ENCODE measurements at regions of chr11 and their contacts with region 1.

Region 1: DNA sequence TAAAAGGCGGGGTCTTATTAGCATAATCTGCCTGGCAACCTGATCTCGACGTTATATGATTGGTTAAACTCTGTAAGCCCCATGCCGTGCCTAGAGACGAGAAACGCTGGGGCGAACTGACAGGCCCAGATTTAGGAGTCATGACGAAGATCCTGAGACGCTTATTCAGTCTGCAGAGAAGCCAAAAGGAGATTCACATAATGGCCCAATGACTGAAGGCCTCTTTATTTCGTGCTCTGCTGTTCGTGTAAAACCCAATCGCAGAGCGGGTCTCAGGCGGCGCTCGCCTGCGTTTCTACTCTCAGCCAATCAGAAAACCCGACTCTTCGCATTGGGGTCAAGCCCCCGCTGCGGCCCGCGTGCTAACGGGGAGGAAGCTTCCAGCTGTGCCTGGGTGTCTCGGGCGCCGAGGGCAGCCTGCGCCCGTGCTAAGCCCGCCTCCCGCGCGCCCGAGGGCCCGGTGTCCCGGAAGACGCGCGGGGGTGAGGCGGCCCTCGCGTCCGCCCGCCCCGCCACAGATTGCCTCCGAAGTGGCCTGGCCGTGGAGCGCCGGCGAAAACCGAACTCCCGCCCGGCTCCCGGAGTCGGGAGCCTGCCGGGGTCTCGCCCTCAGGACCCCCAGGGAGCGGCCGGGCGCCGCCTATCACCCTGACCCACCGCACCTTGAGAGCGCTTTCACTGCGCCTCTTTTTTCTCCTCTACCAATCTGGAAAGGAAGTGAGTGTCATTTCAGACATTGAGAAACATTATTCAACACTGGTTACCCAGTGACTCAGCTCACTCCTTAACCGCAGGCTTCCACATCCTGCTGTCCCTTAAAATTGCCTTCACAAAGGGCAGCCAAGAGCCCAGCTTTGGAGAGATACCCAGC is 446 bp upstream of the PRDM10 start:
- DNase-seq: peak; percentile 95
- ATAC-seq: peak; percentile 82
- H3K4me3 ChIP-seq: peak overlapping the region; percentile 66 to 87 (median 80)
- H3K27ac ChIP-seq: peak overlapping the region; percentile 99
- H3K4me1 ChIP-seq: peaks cover 44% of the 10 kb centered on the region
- H3K27me3 ChIP-seq: no peaks in the 10 kb centered on the region; a peak in 1 of 5 replicates
- CTCF ChIP-seq: no peak
- EP300 ChIP-seq: no peak
- POLR2A ChIP-seq: peak; percentile 66 to 85
- RAD21 ChIP-seq: peak; percentile 60

Region 2: GRCh38 chr11:129709801-129710398 is 293.2 kb before region 1 on chr11:
- CTCF ChIA-PET with region 1: no interaction called
- POLR2A ChIA-PET with region 1: no interaction called
- in situ Hi-C with region 1: no loop called
- intact Hi-C with region 1: no loop called
- DNase-seq: no peak
- ATAC-seq: peak; percentile 28; the same call in 1 of the 3 replicates
- H3K4me3 ChIP-seq: no peak overlapping the region
- H3K27ac ChIP-seq: no peak overlapping the region
- H3K4me1 ChIP-seq: no peaks in the 10 kb centered on the region
- H3K27me3 ChIP-seq: peaks cover 6 to 47% of the 10 kb centered on the region in 2 experiments; a peak in 4 of 5 replicates
- CTCF ChIP-seq: no peak
- EP300 ChIP-seq: no peak
- POLR2A ChIP-seq: no peak
- RAD21 ChIP-seq: no peak

Region 3: DNA sequence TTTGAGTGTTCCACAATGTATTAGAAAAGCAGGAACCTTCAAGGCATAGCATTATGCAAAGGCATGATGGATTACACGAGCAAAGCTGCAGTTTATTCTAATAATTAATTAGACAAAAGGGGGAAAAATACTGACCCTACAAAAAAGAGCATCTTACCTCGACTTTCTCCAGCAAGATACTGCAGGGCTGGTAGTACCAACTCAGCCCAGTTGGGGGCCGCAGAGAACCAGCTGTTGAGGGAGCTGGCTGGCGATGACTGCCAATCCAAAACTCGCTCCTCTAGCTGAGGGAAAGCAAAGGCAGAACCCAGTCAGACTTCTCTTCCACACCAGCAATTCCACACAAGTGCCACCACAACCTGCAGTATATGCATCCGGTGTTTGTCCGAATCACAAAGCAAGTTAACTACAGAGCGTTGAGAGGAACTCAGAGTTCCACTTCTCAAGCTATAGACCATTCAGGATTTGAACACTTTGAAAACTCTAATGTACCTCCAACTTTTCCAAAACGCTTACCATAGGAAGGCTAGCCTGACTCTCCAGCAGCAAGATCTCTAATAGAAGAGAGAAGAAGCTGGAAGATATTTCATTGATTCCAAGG is 121.4 kb before region 1 on chr11:
- CTCF ChIA-PET with region 1: no interaction called
- POLR2A ChIA-PET with region 1: no interaction called
- in situ Hi-C with region 1: no loop called
- intact Hi-C with region 1: no loop called
- DNase-seq: peak; percentile 30
- ATAC-seq: peak; percentile 92
- H3K4me3 ChIP-seq: no peak overlapping the region
- H3K27ac ChIP-seq: no peak overlapping the region
- H3K4me1 ChIP-seq: no peaks in the 10 kb centered on the region
- H3K27me3 ChIP-seq: no peaks in the 10 kb centered on the region
- CTCF ChIP-seq: peak; percentile 57
- EP300 ChIP-seq: no peak
- POLR2A ChIP-seq: no peak
- RAD21 ChIP-seq: no peak

Region 4: GRCh38 chr11:129922674-129923073 is 80.4 kb before region 1 on chr11:
- CTCF ChIA-PET with region 1: no interaction called
- POLR2A ChIA-PET with region 1: no interaction called
- in situ Hi-C with region 1: no loop called
- intact Hi-C with region 1: loop called (anchors 5 kb)
- DNase-seq: no peak
- ATAC-seq: no peak
- H3K4me3 ChIP-seq: no peak overlapping the region
- H3K27ac ChIP-seq: no peak overlapping the region
- H3K4me1 ChIP-seq: no peaks in the 10 kb centered on the region
- H3K27me3 ChIP-seq: no peaks in the 10 kb centered on the region
- CTCF ChIP-seq: no peak
- EP300 ChIP-seq: no peak
- POLR2A ChIP-seq: no peak
- RAD21 ChIP-seq: no peak

Region 5: DNA sequence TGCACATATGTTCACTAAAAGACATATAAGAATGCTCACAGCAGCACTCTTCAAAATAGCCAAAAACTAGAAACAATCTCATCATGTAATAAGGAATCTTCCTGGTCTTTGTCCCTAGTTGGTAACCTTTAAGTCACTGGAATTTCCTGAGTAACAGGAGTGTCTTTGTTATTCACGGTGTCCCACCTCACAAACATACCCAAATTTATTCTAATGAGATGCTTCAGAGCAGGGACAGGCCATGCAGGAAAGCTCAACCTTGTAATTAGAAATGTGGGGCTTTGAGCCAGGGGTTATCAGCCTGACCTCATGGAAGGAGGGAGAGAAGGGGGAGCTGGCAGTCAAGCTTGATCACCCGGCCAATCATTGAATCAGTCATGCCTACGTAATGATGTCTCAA is 67.4 kb before region 1 on chr11:
- CTCF ChIA-PET with region 1: no interaction called
- POLR2A ChIA-PET with region 1: no interaction called
- in situ Hi-C with region 1: no loop called
- intact Hi-C with region 1: no loop called
- DNase-seq: no peak
- ATAC-seq: no peak
- H3K4me3 ChIP-seq: no peak overlapping the region
- H3K27ac ChIP-seq: no peak overlapping the region
- H3K4me1 ChIP-seq: no peaks in the 10 kb centered on the region
- H3K27me3 ChIP-seq: no peaks in the 10 kb centered on the region
- CTCF ChIP-seq: no peak
- EP300 ChIP-seq: no peak
- POLR2A ChIP-seq: no peak
- RAD21 ChIP-seq: no peak

Region 6: GRCh38 chr11:130022798-130023583 is 19.9 kb after region 1 on chr11:
- CTCF ChIA-PET with region 1: no interaction called
- POLR2A ChIA-PET with region 1: interaction called, 10 read pairs
- in situ Hi-C with region 1: no loop called
- intact Hi-C with region 1: no loop called
- DNase-seq: peak; percentile 71
- ATAC-seq: peak; percentile 79
- H3K4me3 ChIP-seq: no peak overlapping the region
- H3K27ac ChIP-seq: no peak overlapping the region
- H3K4me1 ChIP-seq: peaks cover 35% of the 10 kb centered on the region
- H3K27me3 ChIP-seq: no peaks in the 10 kb centered on the region
- CTCF ChIP-seq: no peak
- EP300 ChIP-seq: no peak
- POLR2A ChIP-seq: no peak
- RAD21 ChIP-seq: no peak

Region 7: DNA sequence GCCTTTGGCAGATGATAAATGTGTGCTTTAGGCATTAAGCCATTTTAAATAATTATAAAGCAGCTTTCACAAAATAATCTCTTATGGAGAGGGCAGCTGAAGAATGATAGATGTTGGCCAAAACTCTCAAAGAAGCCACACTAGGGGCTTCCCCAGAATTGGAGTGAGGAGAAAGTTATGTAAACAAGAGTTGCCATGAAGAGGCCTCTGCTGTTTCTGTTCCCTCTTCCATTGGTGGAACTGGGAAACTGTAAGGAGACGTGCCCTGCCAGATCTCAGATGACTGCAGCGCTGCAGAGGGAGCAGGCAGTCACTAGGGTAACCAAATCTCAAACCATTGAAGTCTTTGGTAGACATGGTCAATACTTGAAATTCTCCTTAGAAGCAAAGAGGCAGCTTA is 47.2 kb after region 1 on chr11:
- CTCF ChIA-PET with region 1: no interaction called
- POLR2A ChIA-PET with region 1: interaction called, 17 read pairs
- in situ Hi-C with region 1: no loop called
- intact Hi-C with region 1: no loop called
- DNase-seq: no peak
- ATAC-seq: no peak
- H3K4me3 ChIP-seq: no peak overlapping the region
- H3K27ac ChIP-seq: no peak overlapping the region
- H3K4me1 ChIP-seq: no peaks in the 10 kb centered on the region; the same call in 1 of the 2 replicates
- H3K27me3 ChIP-seq: no peaks in the 10 kb centered on the region
- CTCF ChIP-seq: no peak
- EP300 ChIP-seq: no peak
- POLR2A ChIP-seq: no peak
- RAD21 ChIP-seq: no peak

Region 8: GRCh38 chr11:130124096-130124495 is 121.0 kb after region 1 on chr11:
- CTCF ChIA-PET with region 1: no interaction called
- POLR2A ChIA-PET with region 1: interaction called, 61 read pairs
- in situ Hi-C with region 1: no loop called
- intact Hi-C with region 1: loop called (anchors 1 kb)
- DNase-seq: peak; percentile 97
- ATAC-seq: peak; percentile 99
- H3K4me3 ChIP-seq: no peak overlapping the region
- H3K27ac ChIP-seq: peak overlapping the region; percentile 66
- H3K4me1 ChIP-seq: peaks cover 62% of the 10 kb centered on the region
- H3K27me3 ChIP-seq: no peaks in the 10 kb centered on the region
- CTCF ChIP-seq: peak; percentile 55
- EP300 ChIP-seq: peak; percentile 40 to 86; a peak in 2 of 4 replicates
- POLR2A ChIP-seq: no peak
- RAD21 ChIP-seq: peak; percentile 52

Region 9: DNA sequence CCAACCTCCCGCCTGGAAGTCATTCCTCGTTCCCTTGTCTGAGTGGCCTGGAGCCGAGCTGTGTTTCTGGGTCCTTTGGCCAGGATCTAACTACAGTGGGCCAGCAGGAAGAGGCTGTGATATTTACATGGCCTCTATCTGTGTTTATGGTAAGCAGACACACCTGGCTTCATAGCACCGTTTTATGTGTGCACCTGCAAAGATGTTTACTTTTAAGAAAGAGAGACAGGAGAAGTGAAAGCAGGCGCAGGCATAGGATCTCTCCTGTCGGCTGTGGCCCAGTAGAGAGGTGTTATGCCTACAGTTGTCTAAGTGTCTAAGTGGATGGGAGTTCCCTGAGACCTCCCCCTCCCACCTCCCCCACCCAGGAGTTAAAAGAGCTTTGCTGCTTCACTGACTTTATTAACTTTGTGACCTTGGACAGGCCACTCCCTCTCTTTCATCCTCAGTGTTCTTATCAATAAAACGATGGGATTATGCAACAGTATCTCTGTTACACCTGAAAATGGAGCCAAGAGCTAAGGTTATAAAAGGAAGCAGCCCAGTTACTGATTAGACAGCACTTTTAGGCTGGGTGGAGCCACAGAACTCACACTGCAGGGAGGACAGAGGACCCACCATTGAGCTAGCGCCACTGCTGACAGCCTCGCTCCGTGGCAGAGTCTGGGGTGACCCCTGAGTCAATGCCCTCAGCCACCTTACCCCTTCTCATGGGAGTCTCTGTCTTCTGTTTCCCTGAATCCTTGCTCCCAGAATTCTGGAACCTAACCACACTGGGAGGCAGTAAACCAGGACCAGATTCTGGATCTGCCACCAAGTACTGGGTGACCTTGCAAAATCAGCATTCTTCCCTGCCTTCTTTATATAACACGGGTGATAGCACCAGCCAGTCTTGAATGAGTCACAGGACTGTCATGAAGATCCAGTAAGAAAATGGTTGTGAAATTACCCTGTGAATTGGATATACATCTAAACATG is 178.5 kb after region 1 on chr11:
- CTCF ChIA-PET with region 1: no interaction called
- POLR2A ChIA-PET with region 1: interaction called, 25 read pairs
- in situ Hi-C with region 1: no loop called
- intact Hi-C with region 1: no loop called
- DNase-seq: peak; percentile 99
- ATAC-seq: peak; percentile 96
- H3K4me3 ChIP-seq: peak overlapping the region; percentile 35 to 66 (median 51)
- H3K27ac ChIP-seq: peak overlapping the region; percentile 97
- H3K4me1 ChIP-seq: peaks cover 45% of the 10 kb centered on the region
- H3K27me3 ChIP-seq: no peaks in the 10 kb centered on the region
- CTCF ChIP-seq: peak; percentile 49
- EP300 ChIP-seq: peak in 1 of 2 experiments; percentile 96; a peak in 2 of 4 replicates
- POLR2A ChIP-seq: peak; percentile 84 to 96
- RAD21 ChIP-seq: peak; percentile 33; the same call in 1 of the 2 replicates

Region 10: GRCh38 chr11:130449996-130450769 is 447.1 kb after region 1 on chr11:
- CTCF ChIA-PET with region 1: no interaction called
- POLR2A ChIA-PET with region 1: no interaction called
- in situ Hi-C with region 1: no loop called
- intact Hi-C with region 1: no loop called
- DNase-seq: no peak
- ATAC-seq: no peak
- H3K4me3 ChIP-seq: no peak overlapping the region
- H3K27ac ChIP-seq: no peak overlapping the region
- H3K4me1 ChIP-seq: no peaks in the 10 kb centered on the region
- H3K27me3 ChIP-seq: peaks cover 4 to 46% of the 10 kb centered on the region in 2 experiments; a peak in 2 of 5 replicates
- CTCF ChIP-seq: no peak
- EP300 ChIP-seq: no peak
- POLR2A ChIP-seq: no peak
- RAD21 ChIP-seq: no peak